CD14-positive monocyte (primary cell): ENCODE measurements at regions of chr9 and their contacts with region 1.

Region 1: DNA sequence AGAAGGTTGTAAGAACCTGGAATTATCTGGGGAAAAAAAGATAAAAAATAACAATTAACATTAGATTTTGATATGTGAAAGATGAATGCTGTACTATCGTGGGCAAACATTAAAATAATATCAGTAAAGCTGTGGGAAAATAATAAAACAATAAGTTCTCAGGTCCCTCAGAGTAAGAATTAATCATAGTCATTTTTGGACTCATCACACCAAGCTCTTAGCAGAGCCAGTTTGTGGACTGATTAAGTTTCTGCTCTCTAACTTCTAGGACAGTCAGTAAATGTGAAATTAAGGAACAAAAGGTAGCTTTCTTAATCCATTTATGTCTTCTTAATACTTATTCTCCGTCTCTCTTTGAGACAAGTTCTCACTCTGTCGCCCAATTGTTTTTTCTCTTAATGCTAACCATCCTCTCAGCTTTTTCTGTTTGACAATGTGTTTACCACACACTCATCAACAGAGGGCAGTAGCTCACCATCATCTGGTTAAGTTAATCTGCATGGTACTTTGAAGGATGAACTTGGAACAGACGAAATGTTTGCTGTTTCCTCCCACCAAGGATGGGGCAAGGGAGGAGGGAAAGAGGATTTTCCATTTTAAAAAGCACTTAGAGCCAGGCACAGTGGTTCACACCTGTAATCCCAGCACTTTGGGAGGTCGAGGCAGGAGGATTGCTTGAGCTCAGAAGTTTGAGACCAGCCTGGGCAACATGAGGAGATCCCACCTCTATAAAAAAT is 5.3 kb upstream of the ACO1 start:
- DNase-seq: peak; percentile 50 to 68 (median 62)
- H3K4me3 ChIP-seq: no peak overlapping the region
- H3K4me3 Mint-ChIP-seq: no peak overlapping the region
- H3K27ac ChIP-seq: no peak overlapping the region
- H3K27ac Mint-ChIP-seq: no peak overlapping the region
- H3K4me1 ChIP-seq: peaks cover 7 to 8% of the 10 kb centered on the region in 2 donors
- H3K4me1 Mint-ChIP-seq: peaks cover 15% of the 10 kb centered on the region
- H3K27me3 ChIP-seq: peaks cover 13 to 17% of the 10 kb centered on the region in 2 donors
- H3K27me3 Mint-ChIP-seq: peaks cover 25 to 36% (median 26%) of the 10 kb centered on the region in 3 donors
- CTCF ChIP-seq: peak; percentile 66

Region 2: DNA sequence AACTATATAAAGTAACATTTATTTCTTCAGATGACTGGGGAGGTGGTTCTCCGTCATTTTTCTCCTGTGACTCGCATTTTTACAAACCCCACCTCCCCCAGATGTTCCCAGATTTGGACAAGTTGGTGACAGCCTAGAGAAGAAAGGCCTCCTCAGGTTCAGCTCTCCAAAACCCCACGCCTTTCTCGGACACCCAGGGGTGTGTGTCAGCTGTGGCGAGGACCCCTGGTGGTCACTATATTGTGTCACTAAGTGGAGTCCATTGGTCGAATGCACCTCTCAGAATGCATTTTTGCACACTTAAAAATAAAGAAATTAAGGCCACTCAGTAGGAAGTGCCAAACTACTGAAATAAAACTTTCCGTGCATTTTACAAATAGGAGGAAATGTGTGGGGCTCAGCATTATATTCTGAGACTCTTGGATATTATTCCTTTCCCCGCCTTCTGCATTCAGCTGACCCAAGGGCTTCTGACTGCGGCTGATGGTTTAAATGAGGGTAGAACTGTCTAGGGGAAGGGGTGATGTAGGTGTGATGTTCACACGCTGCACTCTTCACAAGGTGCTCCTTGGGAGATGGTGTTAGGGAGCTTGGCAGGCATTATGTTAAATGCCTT is 52.9 kb after region 1 on chr9:
- intact Hi-C with region 1: no loop called
- DNase-seq: peak; percentile 1 to 15 (median 3)
- H3K4me3 ChIP-seq: no peak overlapping the region
- H3K4me3 Mint-ChIP-seq: no peak overlapping the region
- H3K27ac ChIP-seq: no peak overlapping the region
- H3K27ac Mint-ChIP-seq: peak overlapping the region in 3 of 7 donors; percentile 4 to 5 (median 5)
- H3K4me1 ChIP-seq: no peaks in the 10 kb centered on the region
- H3K4me1 Mint-ChIP-seq: no peaks in the 10 kb centered on the region
- H3K27me3 ChIP-seq: no peaks in the 10 kb centered on the region
- H3K27me3 Mint-ChIP-seq: no peaks in the 10 kb centered on the region
- CTCF ChIP-seq: peak; percentile 44

Region 3: GRCh38 chr9:32579706-32580331 is 200.7 kb after region 1 on chr9:
- intact Hi-C with region 1: loop called (anchors 1 to 2 kb)
- DNase-seq: peak; percentile 52 to 71 (median 56)
- H3K4me3 ChIP-seq: no peak overlapping the region
- H3K4me3 Mint-ChIP-seq: no peak overlapping the region
- H3K27ac ChIP-seq: no peak overlapping the region
- H3K27ac Mint-ChIP-seq: no peak overlapping the region
- H3K4me1 ChIP-seq: no peaks in the 10 kb centered on the region
- H3K4me1 Mint-ChIP-seq: no peaks in the 10 kb centered on the region
- H3K27me3 ChIP-seq: peaks cover 10 to 12% of the 10 kb centered on the region in 2 donors
- H3K27me3 Mint-ChIP-seq: peaks cover 19 to 38% (median 25%) of the 10 kb centered on the region in 3 donors
- CTCF ChIP-seq: peak; percentile 96